ENCODE measurements at regions of chr16 and their contacts with region 1.

Region 1: DNA sequence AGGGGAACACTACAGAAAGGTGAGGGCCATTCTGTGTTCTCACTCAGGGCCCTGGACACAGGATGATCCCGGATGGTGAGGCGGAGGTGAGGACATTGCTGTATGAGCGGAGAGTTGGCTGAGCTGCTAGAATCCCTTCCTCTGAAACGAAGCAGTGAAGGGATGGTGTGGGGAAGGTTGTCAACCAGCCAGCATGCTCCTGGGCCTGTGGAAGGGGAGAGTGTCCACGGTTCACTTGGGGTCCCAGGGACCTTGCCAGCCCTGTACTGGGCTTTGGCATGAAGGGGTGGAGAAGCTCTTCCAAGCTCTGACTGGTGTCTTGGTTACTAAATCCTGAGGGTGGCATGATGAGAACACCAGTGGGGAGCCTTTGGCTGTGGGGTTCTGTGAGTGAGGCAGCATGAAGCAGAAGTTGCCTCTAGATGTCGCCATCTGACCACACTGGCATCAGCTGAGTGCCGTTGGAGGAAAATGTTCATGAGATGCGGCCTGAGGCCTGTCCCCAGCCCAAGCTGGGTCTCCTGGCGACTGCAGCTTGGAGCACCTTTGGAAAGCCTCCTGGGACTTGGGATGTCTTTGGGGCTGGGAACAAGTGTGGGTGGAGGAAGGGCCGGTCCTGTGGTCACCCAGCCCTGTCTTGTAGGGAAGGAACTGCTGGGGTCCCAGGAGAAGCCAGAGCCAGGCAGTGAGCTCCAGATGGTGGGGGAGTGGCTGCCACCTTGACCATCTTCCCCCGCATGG is 14.8 kb downstream of the PDP2 start:
- DNase-seq: peak; percentile 70 to 80
- H3K4me3 ChIP-seq: no peak overlapping the region
- H3K27ac ChIP-seq: peak overlapping the region; percentile 86 to 91
- H3K4me1 ChIP-seq: peaks cover 10 to 51% (median 39%) of the 10 kb centered on the region in 4 donors
- H3K27me3 ChIP-seq: no peaks in the 10 kb centered on the region
- CTCF ChIP-seq: peak; percentile 82 to 96

Region 2: GRCh38 chr16:66608241-66609138 is 286.6 kb before region 1 on chr16:
- intact Hi-C with region 1: no loop called
- DNase-seq: peak; percentile 82 to 90
- H3K4me3 ChIP-seq: no peak overlapping the region
- H3K27ac ChIP-seq: no peak overlapping the region
- H3K4me1 ChIP-seq: peaks cover 0 to 41% (median 28%) of the 10 kb centered on the region in 4 donors
- H3K27me3 ChIP-seq: peaks cover 0 to 14% of the 10 kb centered on the region in 2 donors
- CTCF ChIP-seq: peak; percentile 85 to 92

Region 3: DNA sequence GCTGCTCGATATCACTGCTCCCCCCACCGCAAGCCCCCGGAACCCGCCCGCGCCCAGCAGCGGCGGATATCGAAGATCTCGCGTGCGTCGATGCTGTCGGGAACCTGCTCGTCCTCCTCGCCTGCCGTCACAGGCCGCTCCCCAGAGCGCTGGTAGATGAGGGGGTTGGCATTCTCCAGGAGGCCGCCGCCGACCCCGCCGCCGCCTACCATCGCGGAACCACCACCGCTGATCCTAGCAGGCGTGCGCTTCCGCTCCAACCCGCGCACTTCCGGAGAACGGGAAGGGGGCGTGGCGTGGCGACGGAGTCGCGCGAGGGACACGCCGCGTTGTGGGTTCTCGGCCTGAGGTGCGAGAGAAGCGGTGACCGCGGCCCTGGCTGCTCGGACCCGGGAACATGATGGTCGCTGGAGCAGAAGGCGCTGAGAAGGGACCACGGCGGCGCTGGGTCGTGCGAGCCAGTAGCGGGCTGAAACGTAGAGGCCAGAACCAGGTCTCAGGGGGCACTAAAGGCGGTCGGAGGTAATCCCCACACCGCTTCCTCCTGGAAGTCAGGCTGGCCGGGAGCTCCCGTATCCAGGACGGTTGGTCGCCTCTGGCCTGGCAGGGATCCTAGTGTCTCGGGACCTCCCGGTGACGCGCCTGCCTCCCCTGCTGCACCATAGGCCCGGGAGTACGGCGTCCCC is 39.2 kb after region 1 on chr16 and contains the start of gene CIAO2B:
- intact Hi-C with region 1: loop called (anchors 2 kb)
- DNase-seq: peak; percentile 86 to 94
- H3K4me3 ChIP-seq: peak within 1 kb of the TSS; percentile 95 to 97
- H3K27ac ChIP-seq: peak within 1 kb of the TSS; percentile 95 to 97
- H3K4me1 ChIP-seq: peaks cover 4 to 45% (median 35%) of the 10 kb centered on the region in 4 donors
- H3K27me3 ChIP-seq: no peaks in the 10 kb centered on the region
- CTCF ChIP-seq: no peak

Region 4: DNA sequence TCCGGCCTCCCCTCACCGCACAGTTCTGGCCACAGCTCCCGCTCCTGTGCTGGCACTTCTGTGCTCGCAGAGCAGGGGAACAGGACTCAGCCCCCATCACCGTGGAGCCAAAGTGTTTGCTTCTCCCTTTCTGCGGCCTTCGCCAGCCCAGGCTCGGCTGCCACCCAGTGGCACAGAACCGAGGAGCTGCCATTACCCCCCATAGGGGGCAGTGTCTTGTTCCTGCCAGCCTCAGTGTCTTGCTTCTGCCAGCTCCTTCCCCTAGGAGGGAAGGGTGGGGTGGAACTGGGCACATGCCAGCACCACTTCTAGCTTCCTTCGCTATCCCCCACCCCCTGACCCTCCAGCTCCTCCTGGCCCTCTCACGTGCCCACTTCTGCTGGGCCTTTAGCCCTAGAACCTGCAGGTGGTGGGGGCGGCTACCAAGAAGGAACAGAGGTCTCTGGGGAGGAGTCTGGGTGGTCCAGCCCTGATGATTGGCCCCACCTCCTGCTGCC is 303.2 kb after region 1 on chr16:
- intact Hi-C with region 1: no loop called
- DNase-seq: no peak
- H3K4me3 ChIP-seq: no peak overlapping the region
- H3K27ac ChIP-seq: peak overlapping the region in 1 of 2 donors; percentile 11
- H3K4me1 ChIP-seq: peaks cover 2 to 33% (median 10%) of the 10 kb centered on the region in 4 donors
- H3K27me3 ChIP-seq: no peaks in the 10 kb centered on the region
- CTCF ChIP-seq: peak; percentile 33 to 45